RWPE1 (cell line): ENCODE measurements at regions of chr1 and their contacts with region 1.

Region 1: GRCh38 chr1:176939993-176940392 is 224.5 kb downstream of the ASTN1 start:
- DNase-seq: no peak
- H3K27ac ChIP-seq: no peak overlapping the region
- CTCF ChIP-seq: no peak

Region 2: GRCh38 chr1:177270863-177271262 is 330.9 kb after region 1 on chr1:
- CTCF ChIA-PET with region 1: no interaction called
- POLR2A ChIA-PET with region 1: interaction called, 11 read pairs
- DNase-seq: no peak
- H3K27ac ChIP-seq: no peak overlapping the region
- CTCF ChIP-seq: no peak